ENCODE measurements at regions of chr3 and their contacts with region 1.

Region 1: DNA sequence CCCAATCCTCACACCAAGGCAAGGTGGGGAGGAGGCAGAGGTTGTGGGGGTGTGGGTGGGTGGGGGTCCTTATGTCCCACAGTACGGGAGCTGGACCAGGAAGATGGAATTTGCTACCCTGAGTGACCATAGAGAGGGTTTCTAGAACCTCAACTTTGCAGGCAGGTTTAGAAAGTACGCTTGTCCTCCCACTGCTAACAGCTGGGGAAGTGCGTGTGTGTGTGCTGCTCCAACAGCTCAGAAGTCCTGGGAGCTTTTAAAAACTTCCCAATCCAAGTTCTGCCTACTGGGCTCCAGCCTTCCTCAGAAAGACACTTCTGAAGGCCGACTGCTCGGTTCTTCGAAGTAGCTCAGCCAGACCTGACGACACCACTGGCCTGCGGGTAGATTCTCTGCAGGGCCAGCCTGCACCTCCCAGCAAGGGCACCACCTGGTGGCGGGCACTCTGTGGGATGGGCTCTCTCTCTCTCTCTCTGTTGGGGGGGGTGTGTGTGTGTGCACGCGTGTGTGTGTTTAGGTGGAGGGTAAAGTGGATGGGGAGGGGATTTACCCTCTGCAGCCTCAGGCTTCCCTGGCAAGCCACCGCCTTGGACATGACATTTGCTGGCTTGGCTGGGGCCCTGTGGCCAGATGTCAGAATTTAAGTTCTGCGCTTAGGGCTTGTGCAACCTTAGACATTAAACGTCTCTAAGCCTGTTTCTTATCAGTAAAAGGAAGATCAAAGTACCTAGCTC is 15.6 kb downstream of the TMEM158 start:
- DNase-seq: peak; percentile 53 to 86 (median 76)
- ATAC-seq: peak; percentile 90 to 99 (median 92)
- H3K4me3 ChIP-seq: no peak overlapping the region
- H3K4me3 Mint-ChIP-seq: peak overlapping the region in 1 of 3 donors; percentile 21
- H3K27ac ChIP-seq: no peak overlapping the region
- H3K27ac Mint-ChIP-seq: peak overlapping the region in 1 of 2 donors; percentile 3
- H3K4me1 ChIP-seq: peaks cover 0 to 20% of the 10 kb centered on the region in 2 experiments
- H3K4me1 Mint-ChIP-seq: peaks cover 16 to 20% (median 16%) of the 10 kb centered on the region in 3 donors
- H3K27me3 ChIP-seq: peaks cover 0 to 39% of the 10 kb centered on the region in 2 experiments
- H3K27me3 Mint-ChIP-seq: peaks cover 0 to 16% of the 10 kb centered on the region in 2 donors

Region 2: GRCh38 chr3:45037734-45038455 is 172.6 kb before region 1 on chr3:
- CTCF ChIA-PET with region 1: interaction called, 71 to 119 read pairs
- POLR2A ChIA-PET with region 1: no interaction called
- DNase-seq: peak; percentile 76 to 96 (median 88)
- ATAC-seq: peak; percentile 84 to 92 (median 90)
- H3K4me3 ChIP-seq: no peak overlapping the region
- H3K4me3 Mint-ChIP-seq: peak overlapping the region; percentile 49 to 70 (median 56)
- H3K27ac ChIP-seq: no peak overlapping the region
- H3K27ac Mint-ChIP-seq: no peak overlapping the region
- H3K4me1 ChIP-seq: peaks cover 26 to 47% of the 10 kb centered on the region in 2 experiments
- H3K4me1 Mint-ChIP-seq: peaks cover 45 to 55% (median 52%) of the 10 kb centered on the region in 3 donors
- H3K27me3 ChIP-seq: peaks cover 0 to 33% of the 10 kb centered on the region in 2 experiments
- H3K27me3 Mint-ChIP-seq: peaks cover 7 to 22% of the 10 kb centered on the region in 2 donors

Region 3: DNA sequence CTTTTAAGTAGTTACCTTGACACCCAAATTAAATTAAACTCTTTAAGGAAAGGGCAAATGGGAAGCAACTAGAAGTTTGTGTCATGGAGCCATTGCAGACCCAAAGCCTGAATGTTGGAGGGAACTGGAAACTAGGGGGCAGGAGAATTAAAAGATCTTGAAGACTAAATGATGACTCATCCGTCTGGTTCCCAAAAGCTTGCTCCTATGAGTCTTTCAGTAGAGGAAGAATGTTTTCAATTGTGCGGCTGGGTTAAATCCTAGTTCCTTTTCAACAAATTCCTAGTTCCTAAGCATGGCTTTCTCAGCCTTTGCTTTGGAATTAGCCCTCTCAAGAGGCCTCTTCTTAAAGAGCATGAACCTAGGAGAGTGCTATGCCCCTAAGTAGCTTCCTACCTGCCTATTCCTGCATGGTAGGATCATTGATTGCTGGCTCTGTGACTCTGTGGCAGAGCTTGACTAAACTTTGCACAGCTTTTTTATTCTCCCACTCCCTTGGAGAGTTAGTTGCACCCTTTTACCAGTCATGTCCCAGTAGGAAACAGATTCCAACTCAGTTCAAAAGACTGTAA is 166.7 kb before region 1 on chr3:
- CTCF ChIA-PET with region 1: interaction called, 71 to 119 read pairs
- POLR2A ChIA-PET with region 1: no interaction called
- DNase-seq: no peak
- ATAC-seq: no peak
- H3K4me3 ChIP-seq: no peak overlapping the region
- H3K4me3 Mint-ChIP-seq: no peak overlapping the region
- H3K27ac ChIP-seq: no peak overlapping the region
- H3K27ac Mint-ChIP-seq: no peak overlapping the region
- H3K4me1 ChIP-seq: peaks cover 14 to 15% of the 10 kb centered on the region in 2 experiments
- H3K4me1 Mint-ChIP-seq: peaks cover 14 to 18% (median 17%) of the 10 kb centered on the region in 3 donors
- H3K27me3 ChIP-seq: peaks cover 0 to 15% of the 10 kb centered on the region in 2 experiments
- H3K27me3 Mint-ChIP-seq: peaks cover 6 to 12% of the 10 kb centered on the region in 2 donors

Region 4: GRCh38 chr3:45244356-45244755 is 33.9 kb after region 1 on chr3:
- CTCF ChIA-PET with region 1: no interaction called
- POLR2A ChIA-PET with region 1: no interaction called
- DNase-seq: no peak
- ATAC-seq: no peak
- H3K4me3 ChIP-seq: no peak overlapping the region
- H3K4me3 Mint-ChIP-seq: no peak overlapping the region
- H3K27ac ChIP-seq: no peak overlapping the region
- H3K27ac Mint-ChIP-seq: no peak overlapping the region
- H3K4me1 ChIP-seq: no peaks in the 10 kb centered on the region
- H3K4me1 Mint-ChIP-seq: no peaks in the 10 kb centered on the region
- H3K27me3 ChIP-seq: peaks cover 0 to 21% of the 10 kb centered on the region in 2 experiments
- H3K27me3 Mint-ChIP-seq: peaks cover 9 to 21% of the 10 kb centered on the region in 2 donors

Region 5: GRCh38 chr3:45258317-45258716 is 47.8 kb after region 1 on chr3:
- CTCF ChIA-PET with region 1: no interaction called
- POLR2A ChIA-PET with region 1: no interaction called
- DNase-seq: no peak
- ATAC-seq: no peak
- H3K4me3 ChIP-seq: no peak overlapping the region
- H3K4me3 Mint-ChIP-seq: no peak overlapping the region
- H3K27ac ChIP-seq: no peak overlapping the region
- H3K27ac Mint-ChIP-seq: no peak overlapping the region
- H3K4me1 ChIP-seq: no peaks in the 10 kb centered on the region
- H3K4me1 Mint-ChIP-seq: no peaks in the 10 kb centered on the region
- H3K27me3 ChIP-seq: peaks cover 0 to 10% of the 10 kb centered on the region in 2 experiments
- H3K27me3 Mint-ChIP-seq: peaks cover 12 to 15% of the 10 kb centered on the region in 2 donors

Region 6: DNA sequence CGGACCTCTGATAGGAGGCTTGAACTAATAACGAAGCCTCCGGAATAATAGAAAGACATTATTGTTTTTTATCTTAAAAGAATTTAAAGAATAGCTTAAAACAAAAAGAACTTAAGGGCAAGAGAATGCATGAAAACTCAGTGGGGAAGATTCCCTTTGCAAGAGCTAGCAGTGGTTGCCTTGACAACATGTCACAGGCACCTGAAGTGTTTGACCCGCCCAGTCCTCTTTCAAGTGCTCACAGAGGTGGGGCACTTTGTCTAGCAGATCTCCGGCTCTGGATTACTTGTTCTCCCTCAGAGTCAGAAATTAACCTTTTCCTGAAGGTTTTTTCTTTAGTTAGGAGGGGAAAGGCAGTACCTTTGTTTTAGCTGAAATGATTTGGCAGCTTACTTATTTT is 215.7 kb after region 1 on chr3:
- CTCF ChIA-PET with region 1: no interaction called
- POLR2A ChIA-PET with region 1: no interaction called
- DNase-seq: no peak
- ATAC-seq: no peak
- H3K4me3 ChIP-seq: no peak overlapping the region
- H3K4me3 Mint-ChIP-seq: no peak overlapping the region
- H3K27ac ChIP-seq: no peak overlapping the region
- H3K27ac Mint-ChIP-seq: no peak overlapping the region
- H3K4me1 ChIP-seq: no peaks in the 10 kb centered on the region
- H3K4me1 Mint-ChIP-seq: no peaks in the 10 kb centered on the region
- H3K27me3 ChIP-seq: no peaks in the 10 kb centered on the region
- H3K27me3 Mint-ChIP-seq: no peaks in the 10 kb centered on the region

Measured in T-cell (primary cell).